ENCODE measurements at regions of chr2 and their contacts with region 1.

Region 1: DNA sequence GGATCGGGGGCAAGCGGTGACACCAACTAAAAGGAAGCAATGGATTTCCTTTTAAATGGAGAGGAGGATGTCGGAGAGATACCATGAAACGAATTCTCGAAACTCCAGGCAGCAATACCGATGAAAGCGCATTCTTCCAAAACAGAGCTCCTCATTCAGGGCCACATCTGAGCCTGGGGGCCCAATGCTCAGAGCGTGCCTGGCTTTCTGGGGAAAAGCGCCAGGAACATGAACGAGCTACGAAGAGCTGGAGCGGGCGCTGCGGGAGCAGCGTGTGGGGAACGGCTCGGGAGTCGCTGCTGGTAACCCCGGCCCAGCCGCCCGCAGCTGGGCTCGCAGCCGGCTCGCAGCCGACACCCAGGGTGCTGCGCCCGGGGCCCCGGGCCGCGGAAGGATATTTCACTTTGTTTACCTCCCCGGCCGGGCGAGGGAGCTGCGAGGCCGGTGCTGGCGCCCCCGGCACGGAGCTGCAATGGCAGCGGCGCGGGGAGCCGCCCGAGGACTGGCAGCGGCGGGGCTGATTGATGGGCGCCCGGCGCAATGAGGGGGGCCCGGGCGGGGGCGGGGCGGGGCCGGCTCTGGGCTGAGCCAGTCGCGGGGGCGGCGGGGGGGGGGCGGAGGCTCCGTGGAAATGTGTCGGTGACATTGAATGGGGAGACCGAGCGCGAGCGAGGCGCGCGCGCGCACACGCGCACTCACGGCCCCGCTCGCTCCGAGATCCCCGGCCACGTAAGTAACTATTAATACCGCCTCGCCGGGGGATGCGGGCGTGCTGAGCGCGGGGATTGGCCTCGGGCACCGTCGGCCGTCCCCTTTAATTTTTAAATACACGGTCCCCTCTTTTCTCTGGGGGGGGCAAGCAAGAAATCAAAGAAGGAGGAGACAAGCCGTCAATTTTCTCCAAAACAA is at the start of gene TRIB2:
- DNase-seq: peak; percentile 93
- H3K4me3 Mint-ChIP-seq: peak within 1 kb of the TSS; percentile 98
- H3K27ac Mint-ChIP-seq: peak within 1 kb of the TSS; percentile 97
- H3K4me1 Mint-ChIP-seq: peaks cover 41% of the 10 kb centered on the region
- H3K27me3 Mint-ChIP-seq: peaks cover 10% of the 10 kb centered on the region

Region 2: GRCh38 chr2:11829947-11830707 is 886.4 kb before region 1 on chr2:
- CTCF ChIA-PET with region 1: interaction called, 11 read pairs
- DNase-seq: peak; percentile 69
- H3K4me3 Mint-ChIP-seq: peak overlapping the region; percentile 74
- H3K27ac Mint-ChIP-seq: peak overlapping the region; percentile 89
- H3K4me1 Mint-ChIP-seq: peaks cover 63% of the 10 kb centered on the region
- H3K27me3 Mint-ChIP-seq: peaks cover 31% of the 10 kb centered on the region

Region 3: DNA sequence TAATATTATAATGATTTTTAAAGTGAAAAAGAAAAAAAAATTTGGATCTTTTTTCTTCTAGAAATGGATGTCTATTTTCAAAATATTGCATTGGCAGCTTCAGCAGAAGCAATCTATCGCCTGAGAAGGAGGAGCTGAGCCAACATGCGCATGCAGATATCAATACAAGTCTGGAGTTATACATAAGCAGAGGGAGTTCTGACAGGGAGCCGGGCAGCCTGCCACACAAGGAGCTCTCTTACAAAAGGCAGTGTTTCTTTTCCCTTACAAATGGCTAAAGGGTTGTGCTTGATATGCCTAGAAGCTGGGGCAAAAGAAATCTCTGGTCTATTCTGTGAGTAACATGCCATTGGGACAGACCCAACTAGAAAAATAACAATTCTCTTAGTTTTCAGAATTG is 291.7 kb before region 1 on chr2:
- CTCF ChIA-PET with region 1: interaction called, 12 read pairs
- DNase-seq: no peak
- H3K4me3 Mint-ChIP-seq: no peak overlapping the region
- H3K27ac Mint-ChIP-seq: no peak overlapping the region
- H3K4me1 Mint-ChIP-seq: peaks cover 25% of the 10 kb centered on the region
- H3K27me3 Mint-ChIP-seq: no peaks in the 10 kb centered on the region

Region 4: DNA sequence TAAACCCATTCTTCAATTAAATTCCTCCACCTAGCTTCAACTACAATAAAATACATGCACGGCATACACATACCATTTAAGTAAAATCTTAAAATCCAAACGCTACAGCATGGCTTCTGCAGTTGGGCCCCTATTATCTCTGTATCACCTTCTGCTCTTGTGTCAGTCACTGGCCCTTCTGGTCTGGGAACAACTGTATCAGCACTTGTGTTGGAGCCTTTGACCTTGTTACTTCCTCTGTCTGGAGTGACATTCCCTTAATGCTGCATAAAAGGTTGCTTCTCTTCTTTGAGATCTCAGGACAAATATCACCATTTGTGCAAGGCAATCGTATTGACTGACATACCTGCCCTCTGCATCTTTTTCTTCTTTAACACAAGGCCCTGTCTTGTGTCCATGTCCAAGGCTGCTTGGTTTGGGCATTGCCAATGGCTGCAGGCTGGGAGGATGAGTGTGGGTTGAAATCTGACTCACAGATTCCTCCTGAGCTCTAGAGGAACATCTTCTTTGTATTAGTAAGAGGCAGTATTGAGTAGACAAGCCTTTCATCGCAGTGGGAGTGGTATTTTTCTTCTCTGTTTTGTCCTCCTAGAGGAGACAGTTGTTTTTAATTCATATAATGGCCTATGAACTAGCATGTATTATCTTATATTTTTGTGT is 267.6 kb before region 1 on chr2:
- CTCF ChIA-PET with region 1: no interaction called
- DNase-seq: no peak
- H3K4me3 Mint-ChIP-seq: no peak overlapping the region
- H3K27ac Mint-ChIP-seq: no peak overlapping the region
- H3K4me1 Mint-ChIP-seq: peaks cover 25% of the 10 kb centered on the region
- H3K27me3 Mint-ChIP-seq: no peaks in the 10 kb centered on the region

Region 5: DNA sequence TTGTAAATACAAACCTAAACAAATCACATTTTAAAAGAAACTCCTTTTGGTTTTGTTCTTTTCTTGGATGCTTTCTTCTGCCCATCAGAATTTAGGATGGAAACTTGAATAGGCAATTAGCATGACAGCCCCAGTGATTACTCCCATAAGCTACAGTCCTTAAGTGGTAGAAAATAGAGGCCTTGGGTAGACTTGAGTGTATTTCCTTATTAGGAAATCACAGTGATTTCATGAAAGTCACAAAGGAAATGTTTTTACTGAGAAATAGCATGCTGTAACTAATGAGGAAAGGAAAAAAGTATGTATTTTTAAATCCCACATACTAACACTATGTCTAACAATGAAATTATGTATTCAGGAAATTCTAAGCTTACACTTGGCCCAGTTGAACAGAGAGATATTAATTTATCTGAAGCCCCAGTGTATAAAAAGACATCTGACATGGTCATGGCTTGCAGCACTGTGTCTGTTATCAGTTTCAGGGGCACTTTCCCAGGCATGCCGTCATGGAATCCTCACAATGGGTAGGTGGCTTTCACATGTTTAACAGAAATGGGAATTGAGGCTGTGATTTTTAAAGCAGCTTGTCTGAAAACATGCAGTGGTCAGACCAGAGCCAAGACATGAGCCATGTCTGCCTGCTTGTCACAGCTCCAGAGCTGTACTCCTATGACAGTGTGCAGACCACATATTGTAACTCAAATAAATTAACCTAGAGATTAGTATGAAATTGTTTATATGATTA is 79.5 kb before region 1 on chr2:
- CTCF ChIA-PET with region 1: no interaction called
- DNase-seq: no peak
- H3K4me3 Mint-ChIP-seq: no peak overlapping the region
- H3K27ac Mint-ChIP-seq: no peak overlapping the region
- H3K4me1 Mint-ChIP-seq: peaks cover 39% of the 10 kb centered on the region
- H3K27me3 Mint-ChIP-seq: no peaks in the 10 kb centered on the region

Region 6: DNA sequence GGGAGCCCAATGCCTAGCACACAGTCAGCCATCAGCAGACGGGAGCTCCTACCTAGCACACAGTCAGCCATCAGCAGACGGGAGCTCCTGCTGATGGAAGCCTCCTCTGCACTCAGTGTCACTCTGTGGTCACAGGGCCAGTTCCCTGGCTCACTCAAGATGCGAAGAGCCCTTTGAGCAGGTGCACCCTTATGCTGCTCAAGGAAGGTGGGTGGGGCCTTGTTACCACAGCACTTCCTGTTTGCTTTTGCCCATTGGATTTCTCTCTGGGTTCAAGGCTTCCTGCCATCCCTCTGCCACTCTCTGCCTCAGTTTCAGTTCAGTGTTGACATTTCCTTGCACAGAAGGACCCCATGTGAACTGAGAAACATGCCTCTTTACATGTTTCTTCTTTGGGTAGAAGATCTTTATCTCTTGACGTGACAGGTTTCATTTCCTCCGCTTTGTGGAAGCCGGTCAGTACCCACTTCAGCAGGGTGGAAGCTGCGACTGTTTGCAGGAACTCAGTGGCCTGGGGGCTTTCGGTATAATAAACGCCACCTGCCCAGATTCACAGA is 11.8 kb after region 1 on chr2:
- CTCF ChIA-PET with region 1: interaction called, 13 read pairs
- DNase-seq: peak; percentile 91
- H3K4me3 Mint-ChIP-seq: peak overlapping the region; percentile 52
- H3K27ac Mint-ChIP-seq: peak overlapping the region; percentile 88
- H3K4me1 Mint-ChIP-seq: peaks cover 95% of the 10 kb centered on the region
- H3K27me3 Mint-ChIP-seq: no peaks in the 10 kb centered on the region

Region 7: DNA sequence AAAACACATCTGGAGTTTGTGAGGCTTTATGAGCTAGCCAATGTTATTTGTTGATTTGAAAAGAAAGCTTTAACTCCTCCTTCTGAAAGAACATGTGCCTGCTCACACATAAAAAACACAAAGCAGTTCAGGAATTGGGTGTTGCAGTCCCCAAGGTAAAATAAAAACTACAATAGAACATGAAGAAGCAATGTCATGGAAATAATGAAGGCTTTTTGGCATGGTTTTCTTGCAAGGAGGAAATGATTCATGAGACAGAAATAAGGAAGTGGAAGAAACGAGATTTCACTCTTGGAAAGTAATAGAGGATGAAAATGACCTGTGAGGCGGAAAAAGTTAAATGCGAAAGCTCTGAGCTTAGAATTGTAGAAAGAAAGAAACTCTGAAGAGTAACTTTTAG is 81.3 kb after region 1 on chr2:
- CTCF ChIA-PET with region 1: no interaction called
- DNase-seq: no peak
- H3K4me3 Mint-ChIP-seq: no peak overlapping the region
- H3K27ac Mint-ChIP-seq: no peak overlapping the region
- H3K4me1 Mint-ChIP-seq: no peaks in the 10 kb centered on the region
- H3K27me3 Mint-ChIP-seq: peaks cover 4% of the 10 kb centered on the region

Region 8: DNA sequence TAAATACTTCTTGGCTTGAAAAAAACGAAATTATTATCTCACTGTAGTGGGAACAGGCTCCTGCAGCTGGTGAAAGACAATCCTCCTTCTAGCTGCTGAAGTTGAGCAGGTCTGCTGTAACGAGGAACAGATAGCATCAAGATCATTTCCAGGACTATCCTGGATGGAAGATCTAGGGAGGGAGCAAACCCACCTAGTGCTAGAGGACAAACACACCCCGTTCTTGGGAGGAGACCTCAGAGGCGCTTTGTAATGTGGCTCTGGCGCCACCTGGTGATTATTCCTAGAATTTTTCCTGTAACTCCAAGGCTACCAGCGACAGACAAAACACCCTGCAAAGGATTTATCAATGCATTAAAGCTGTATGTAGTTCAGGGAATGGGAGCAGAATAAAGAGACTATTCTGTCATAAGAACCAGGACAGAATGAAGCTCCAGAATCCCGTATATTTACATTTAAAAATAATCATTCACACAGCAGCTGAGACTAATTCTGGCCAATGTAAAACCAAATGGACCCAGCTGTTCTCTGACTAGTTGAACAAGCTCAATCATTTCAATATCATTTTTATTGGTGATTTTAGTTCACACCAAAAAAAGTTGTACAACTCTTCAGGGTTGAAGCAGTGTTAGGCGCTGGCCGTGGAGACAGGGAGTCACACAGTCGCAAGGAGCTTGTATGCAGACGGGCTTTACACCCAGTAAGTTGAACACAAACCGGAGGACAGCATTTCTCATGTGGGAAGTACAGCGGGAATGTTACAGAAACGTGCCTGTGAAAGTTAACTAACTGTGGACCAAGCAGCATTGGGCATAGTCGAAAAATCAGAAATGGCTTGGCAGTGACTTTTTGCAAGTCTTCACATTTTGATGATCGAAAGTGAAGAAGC is 290.5 kb after region 1 on chr2:
- CTCF ChIA-PET with region 1: interaction called, 29 read pairs
- DNase-seq: peak; percentile 72
- H3K4me3 Mint-ChIP-seq: no peak overlapping the region
- H3K27ac Mint-ChIP-seq: no peak overlapping the region
- H3K4me1 Mint-ChIP-seq: peaks cover 2% of the 10 kb centered on the region
- H3K27me3 Mint-ChIP-seq: peaks cover 28% of the 10 kb centered on the region